Naive thymus-derived CD4-positive, alpha-beta T cell (primary cell): ENCODE measurements at regions of chr1 and their contacts with region 1.

Region 1: DNA sequence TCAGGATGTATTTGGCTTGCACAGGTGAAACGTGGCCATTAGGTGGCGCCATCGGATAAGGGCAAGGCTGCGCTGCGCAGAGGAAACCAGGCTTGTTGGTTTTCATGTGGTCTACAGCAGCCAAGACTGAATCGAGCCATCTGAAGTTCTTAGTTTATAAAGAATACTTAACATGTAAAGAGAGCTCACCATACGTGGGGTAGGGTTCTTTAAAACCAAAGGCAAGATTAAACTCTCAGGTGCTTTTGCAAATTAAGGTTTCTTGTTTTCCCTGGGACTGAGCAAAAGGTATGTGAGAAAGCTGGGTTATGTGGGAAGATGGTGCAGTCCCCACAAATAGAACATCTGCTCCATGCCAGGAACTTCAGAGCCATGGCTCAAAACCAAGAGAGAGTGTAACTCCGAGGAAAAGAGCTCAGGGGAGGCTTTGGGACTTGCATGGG is 9.3 kb downstream of the MASP2 start:
- DNase-seq: peak; percentile 76 to 90 (median 85)
- ATAC-seq: peak; percentile 99
- H3K4me3 ChIP-seq: no peak overlapping the region
- H3K4me3 Mint-ChIP-seq: no peak overlapping the region
- H3K27ac ChIP-seq: no peak overlapping the region
- H3K27ac Mint-ChIP-seq: no peak overlapping the region
- H3K4me1 ChIP-seq: no peaks in the 10 kb centered on the region
- H3K4me1 Mint-ChIP-seq: peaks cover 0 to 9% (median 6%) of the 10 kb centered on the region in 7 donors
- H3K27me3 ChIP-seq: peaks cover 0 to 4% of the 10 kb centered on the region in 2 donors
- H3K27me3 Mint-ChIP-seq: no peaks in the 10 kb centered on the region

Region 2: GRCh38 chr1:11099310-11100149 is 61.8 kb after region 1 on chr1 and contains the start of gene EXOSC10:
- CTCF ChIA-PET with region 1: interaction called, 6 read pairs
- POLR2A ChIA-PET with region 1: no interaction called
- intact Hi-C with region 1: loop called (anchors 1 to 2 kb)
- DNase-seq: peak; percentile 90 to 97 (median 95)
- ATAC-seq: peak; percentile 99
- H3K4me3 ChIP-seq: peak within 1 kb of the TSS; percentile 74
- H3K4me3 Mint-ChIP-seq: peak within 1 kb of the TSS; percentile 87 to 99 (median 96)
- H3K27ac ChIP-seq: peak within 1 kb of the TSS; percentile 88
- H3K27ac Mint-ChIP-seq: peak within 1 kb of the TSS; percentile 91 to 97 (median 95)
- H3K4me1 ChIP-seq: peaks cover 3 to 4% of the 10 kb centered on the region in 2 donors
- H3K4me1 Mint-ChIP-seq: peaks cover 6 to 27% (median 20%) of the 10 kb centered on the region in 7 donors
- H3K27me3 ChIP-seq: no peaks in the 10 kb centered on the region
- H3K27me3 Mint-ChIP-seq: no peaks in the 10 kb centered on the region
- total RNA-seq, gene EXOSC10: 72.0 to 83.4 (median 80.9) TPM

Region 3: DNA sequence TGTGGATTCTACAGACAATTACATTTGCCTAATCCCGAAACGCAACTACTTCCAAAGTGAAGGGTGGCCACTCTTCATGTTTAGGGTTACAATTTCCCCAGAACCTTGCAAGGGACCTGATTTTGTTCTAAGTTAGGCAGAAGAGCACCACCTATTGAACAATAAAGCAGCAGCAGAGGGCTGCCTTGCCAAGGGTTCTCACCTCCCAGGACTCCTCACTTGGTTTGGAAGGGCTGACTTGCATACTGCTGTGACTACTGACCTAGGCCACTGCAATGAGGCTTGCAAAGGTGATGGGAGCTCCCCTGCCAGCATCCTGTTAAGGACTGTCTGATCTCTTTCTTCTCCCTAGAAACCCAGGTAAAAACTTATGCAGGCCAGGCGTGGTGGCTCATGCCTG is 210.4 kb after region 1 on chr1:
- CTCF ChIA-PET with region 1: interaction called, 6 read pairs
- POLR2A ChIA-PET with region 1: no interaction called
- intact Hi-C with region 1: loop called in 1 of 2 experiments (anchors 5 kb)
- DNase-seq: no peak
- ATAC-seq: no peak
- H3K4me3 ChIP-seq: no peak overlapping the region
- H3K4me3 Mint-ChIP-seq: no peak overlapping the region
- H3K27ac ChIP-seq: no peak overlapping the region
- H3K27ac Mint-ChIP-seq: peak overlapping the region in 1 of 9 donors; percentile 12
- H3K4me1 ChIP-seq: peaks cover 0 to 7% of the 10 kb centered on the region in 2 donors
- H3K4me1 Mint-ChIP-seq: peaks cover 0 to 20% (median 4%) of the 10 kb centered on the region in 7 donors
- H3K27me3 ChIP-seq: no peaks in the 10 kb centered on the region
- H3K27me3 Mint-ChIP-seq: no peaks in the 10 kb centered on the region

Region 4: GRCh38 chr1:11337580-11338073 is 299.9 kb after region 1 on chr1:
- CTCF ChIA-PET with region 1: interaction called, 3 read pairs
- POLR2A ChIA-PET with region 1: no interaction called
- intact Hi-C with region 1: loop called in 1 of 2 experiments (anchors 5 kb)
- DNase-seq: peak; percentile 46 to 80 (median 68)
- ATAC-seq: peak; percentile 63
- H3K4me3 ChIP-seq: no peak overlapping the region
- H3K4me3 Mint-ChIP-seq: peak overlapping the region in 3 of 10 donors; percentile 9 to 39 (median 36)
- H3K27ac ChIP-seq: no peak overlapping the region
- H3K27ac Mint-ChIP-seq: no peak overlapping the region
- H3K4me1 ChIP-seq: peaks cover 0 to 5% of the 10 kb centered on the region in 2 donors
- H3K4me1 Mint-ChIP-seq: peaks cover 3 to 27% (median 20%) of the 10 kb centered on the region in 7 donors
- H3K27me3 ChIP-seq: no peaks in the 10 kb centered on the region
- H3K27me3 Mint-ChIP-seq: peaks cover 0 to 38% (median 10%) of the 10 kb centered on the region in 5 donors

Region 5: GRCh38 chr1:11893907-11894251 is 856.1 kb after region 1 on chr1:
- CTCF ChIA-PET with region 1: no interaction called
- POLR2A ChIA-PET with region 1: no interaction called
- intact Hi-C with region 1: loop called in 1 of 2 experiments (anchors 1 kb)
- DNase-seq: peak; percentile 41 to 77 (median 61)
- ATAC-seq: peak; percentile 91
- H3K4me3 ChIP-seq: no peak overlapping the region
- H3K4me3 Mint-ChIP-seq: peak overlapping the region in 1 of 10 donors; percentile 2
- H3K27ac ChIP-seq: no peak overlapping the region
- H3K27ac Mint-ChIP-seq: peak overlapping the region in 2 of 9 donors; percentile 25 to 54
- H3K4me1 ChIP-seq: no peaks in the 10 kb centered on the region
- H3K4me1 Mint-ChIP-seq: peaks cover 0 to 4% (median 0%) of the 10 kb centered on the region in 7 donors
- H3K27me3 ChIP-seq: peaks cover 0 to 4% of the 10 kb centered on the region in 2 donors
- H3K27me3 Mint-ChIP-seq: peaks cover 20 to 49% (median 31%) of the 10 kb centered on the region in 5 donors